HepG2 (cell line): ENCODE measurements at regions of chr3 and their contacts with region 1.

Region 1: DNA sequence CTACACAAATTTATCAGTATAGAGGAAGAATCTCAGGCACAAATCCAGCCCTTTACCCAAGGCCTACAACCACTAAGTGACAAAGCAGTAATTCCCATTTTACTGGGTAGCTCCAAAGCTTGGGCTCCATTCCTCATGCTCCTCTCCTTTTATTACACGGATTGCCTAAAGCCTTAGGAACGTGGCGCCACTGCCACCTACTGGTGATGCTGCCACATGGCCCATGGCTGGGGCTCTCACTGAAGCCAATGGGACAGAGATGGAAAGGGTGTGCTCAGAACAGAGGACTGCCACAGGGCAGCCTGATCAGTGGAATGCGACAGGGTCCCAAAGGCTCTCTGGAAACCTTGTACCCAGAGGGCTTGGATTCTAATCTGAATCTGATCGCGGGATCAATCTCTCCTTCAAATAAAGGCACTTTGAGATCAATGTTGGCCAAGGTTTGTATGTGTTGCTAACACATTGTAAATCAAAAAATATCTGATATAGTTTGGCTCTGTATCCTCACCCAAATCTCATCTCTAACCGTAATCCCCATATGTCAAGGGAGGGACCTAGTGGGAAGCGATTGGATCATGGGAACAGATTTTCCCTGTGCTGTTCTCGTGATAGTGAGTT is 33.5 kb upstream of the LYZL4 start:
- DNase-seq: peak; percentile 70
- ATAC-seq: peak; percentile 99
- H3K4me3 ChIP-seq: no peak overlapping the region
- H3K27ac ChIP-seq: no peak overlapping the region
- H3K4me1 ChIP-seq: no peaks in the 10 kb centered on the region
- H3K27me3 ChIP-seq: no peaks in the 10 kb centered on the region
- CTCF ChIP-seq: peak; percentile 98
- EP300 ChIP-seq: no peak
- POLR2A ChIP-seq: no peak
- RAD21 ChIP-seq: peak; percentile 97

Region 2: DNA sequence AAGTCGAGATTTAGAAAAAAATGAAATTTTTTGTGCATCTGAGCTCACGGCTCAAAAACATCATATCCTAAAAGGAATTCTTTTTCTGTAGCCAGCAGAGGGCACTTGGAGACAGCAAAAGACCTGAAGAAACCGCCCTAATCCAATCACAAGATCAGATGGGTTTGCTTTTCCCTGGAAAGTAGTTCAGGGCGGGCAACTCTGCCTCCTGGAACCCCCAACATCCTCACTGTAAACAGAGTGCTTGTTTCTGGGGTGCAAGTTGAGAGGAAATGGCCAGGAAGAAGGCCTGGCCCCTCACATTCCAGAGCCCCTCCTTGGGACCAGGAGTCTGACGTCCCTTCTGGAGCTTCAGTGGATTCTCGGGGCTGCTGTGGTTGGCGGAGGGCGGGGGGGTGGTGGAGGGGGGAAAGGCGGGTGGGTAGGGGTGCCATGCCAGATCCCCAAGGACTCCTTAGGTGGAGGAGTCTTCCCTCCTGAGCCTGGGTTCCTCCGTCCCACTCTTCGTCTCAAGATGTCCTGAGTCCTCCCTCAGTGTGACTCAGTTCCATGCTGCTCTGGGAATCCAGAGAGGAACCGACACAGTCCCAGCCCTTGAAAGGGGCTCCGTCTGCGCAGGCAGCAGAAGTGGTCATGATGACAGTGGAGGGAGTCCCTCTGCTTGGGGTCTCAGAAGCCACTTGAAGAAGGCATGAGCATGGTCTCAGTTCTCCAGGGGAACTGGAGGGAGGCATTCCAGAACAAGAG is 213.8 kb before region 1 on chr3:
- CTCF ChIA-PET with region 1: interaction called, 25 read pairs
- POLR2A ChIA-PET with region 1: no interaction called
- in situ Hi-C with region 1: no loop called
- intact Hi-C with region 1: loop called (anchors 1 kb)
- DNase-seq: peak; percentile 50
- ATAC-seq: peak; percentile 51
- H3K4me3 ChIP-seq: no peak overlapping the region
- H3K27ac ChIP-seq: no peak overlapping the region
- H3K4me1 ChIP-seq: peaks cover 12% of the 10 kb centered on the region
- H3K27me3 ChIP-seq: peaks cover 0 to 12% of the 10 kb centered on the region in 2 experiments; a peak in 1 of 5 replicates
- CTCF ChIP-seq: peak; percentile 69
- EP300 ChIP-seq: no peak
- POLR2A ChIP-seq: no peak
- RAD21 ChIP-seq: peak; percentile 74

Region 3: DNA sequence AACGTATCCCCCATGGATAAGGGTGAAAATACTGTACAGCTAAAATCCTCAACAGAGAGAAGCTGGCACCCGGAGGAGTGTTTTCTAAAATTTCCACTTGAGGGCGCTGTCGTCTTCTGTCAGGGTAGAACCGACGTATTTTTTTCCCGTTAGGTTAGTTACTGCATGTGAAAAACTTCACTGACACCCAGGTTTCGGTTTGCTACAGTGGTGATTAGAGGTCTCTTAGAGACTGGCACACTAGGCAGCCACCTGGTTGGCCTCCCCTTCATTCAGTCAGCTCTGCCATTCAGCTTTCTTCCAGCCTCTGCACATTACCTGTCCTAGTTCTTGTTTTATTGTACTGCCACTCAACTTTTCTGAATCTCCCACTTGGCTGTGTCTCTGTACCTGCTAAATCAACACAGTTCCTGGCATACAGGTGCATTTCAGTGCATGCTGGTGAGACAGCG is 196.3 kb before region 1 on chr3:
- CTCF ChIA-PET with region 1: interaction called, 65 read pairs
- POLR2A ChIA-PET with region 1: no interaction called
- in situ Hi-C with region 1: loop called (anchors 5 kb)
- intact Hi-C with region 1: loop called (anchors 1 kb)
- DNase-seq: peak; percentile 59
- ATAC-seq: peak; percentile 85
- H3K4me3 ChIP-seq: 0 out of 6 replicates have a peak overlapping the region, but pooled peaks of 1 of the 3 experiments have one; percentile 12
- H3K27ac ChIP-seq: no peak overlapping the region
- H3K4me1 ChIP-seq: no peaks in the 10 kb centered on the region
- H3K27me3 ChIP-seq: peaks cover 0 to 22% of the 10 kb centered on the region in 2 experiments; a peak in 3 of 5 replicates
- CTCF ChIP-seq: peak; percentile 82
- EP300 ChIP-seq: no peak
- POLR2A ChIP-seq: no peak
- RAD21 ChIP-seq: peak; percentile 81

Region 4: DNA sequence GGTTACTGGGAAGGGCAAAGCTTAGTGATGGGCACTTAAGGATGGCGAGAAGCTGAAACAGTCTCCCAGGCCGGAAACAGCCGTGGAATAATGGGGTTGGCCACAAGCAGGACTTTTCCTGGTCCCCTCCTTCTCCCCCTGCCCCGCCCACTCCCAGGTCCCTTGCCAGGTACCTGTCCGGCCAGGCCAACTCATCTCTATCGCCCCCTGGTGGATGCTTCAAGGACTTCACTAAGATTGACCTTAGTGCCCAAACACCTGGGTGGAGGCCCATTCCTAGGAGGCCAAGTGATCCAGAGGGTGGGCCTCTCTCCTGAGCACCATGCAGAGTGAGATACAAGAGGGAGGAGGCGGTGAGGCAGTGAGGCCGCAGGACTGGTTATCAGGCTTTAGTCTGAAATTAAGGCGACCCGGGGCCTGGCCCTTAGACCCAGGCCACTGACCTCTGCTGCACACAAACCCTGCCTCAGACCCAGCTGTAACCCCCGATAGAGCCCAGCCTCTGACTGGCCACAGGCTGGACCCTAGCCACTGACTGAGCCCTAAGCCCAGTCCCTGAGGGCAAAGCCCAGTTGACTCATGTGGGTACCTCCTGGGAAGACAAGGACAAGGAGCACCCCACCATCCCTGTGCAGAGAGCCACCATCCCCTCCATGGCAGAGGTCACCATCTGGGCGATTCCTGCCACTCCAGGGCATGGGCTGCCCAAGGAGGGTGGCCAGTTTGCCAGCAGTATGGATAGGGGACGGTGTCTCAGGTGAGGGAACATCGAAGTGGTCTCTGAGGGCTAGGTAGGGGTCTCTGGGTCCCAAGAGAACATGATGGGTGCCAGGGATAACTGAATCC is 96.2 kb after region 1 on chr3:
- CTCF ChIA-PET with region 1: no interaction called
- POLR2A ChIA-PET with region 1: no interaction called
- in situ Hi-C with region 1: loop called (anchors 10 kb)
- intact Hi-C with region 1: loop called (anchors 5 kb)
- DNase-seq: peak; percentile 54
- ATAC-seq: peak; percentile 59
- H3K4me3 ChIP-seq: no peak overlapping the region
- H3K27ac ChIP-seq: no peak overlapping the region
- H3K4me1 ChIP-seq: peaks cover 13% of the 10 kb centered on the region
- H3K27me3 ChIP-seq: no peaks in the 10 kb centered on the region
- CTCF ChIP-seq: peak; percentile 79
- EP300 ChIP-seq: no peak
- POLR2A ChIP-seq: no peak
- RAD21 ChIP-seq: 0 out of 2 replicates have a peak, but pooled peaks have one; percentile 24

Region 5: DNA sequence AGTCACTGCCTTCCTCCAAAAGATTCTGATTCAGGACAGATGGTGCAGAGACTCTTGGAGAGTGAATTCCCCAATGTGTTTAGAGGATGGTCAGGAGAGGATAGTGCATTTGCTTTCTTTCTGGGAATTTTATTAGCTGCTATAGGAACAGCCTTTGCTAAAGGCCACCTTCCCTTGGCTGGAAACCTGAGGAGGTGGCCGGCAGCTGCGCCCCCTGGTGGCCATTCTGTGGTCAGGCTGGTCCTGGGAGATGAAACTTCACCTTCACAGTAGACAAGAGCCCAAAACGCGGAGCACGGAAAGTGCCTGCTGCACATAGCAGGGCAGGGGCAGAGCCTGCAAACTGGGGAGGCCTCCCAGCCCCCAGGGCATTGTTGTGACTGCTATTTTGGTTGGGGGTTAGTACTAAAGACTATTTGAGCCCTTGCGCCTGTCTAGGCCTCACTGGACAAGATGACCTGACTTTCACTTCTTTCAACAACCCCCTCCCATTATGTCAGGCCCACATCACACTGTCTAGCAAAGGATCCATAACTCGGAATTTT is 103.5 kb after region 1 on chr3:
- CTCF ChIA-PET with region 1: no interaction called
- POLR2A ChIA-PET with region 1: no interaction called
- in situ Hi-C with region 1: loop called (anchors 10 kb)
- intact Hi-C with region 1: no loop called
- DNase-seq: peak; percentile 23
- ATAC-seq: peak; percentile 67
- H3K4me3 ChIP-seq: no peak overlapping the region
- H3K27ac ChIP-seq: no peak overlapping the region
- H3K4me1 ChIP-seq: peaks cover 22% of the 10 kb centered on the region
- H3K27me3 ChIP-seq: no peaks in the 10 kb centered on the region
- CTCF ChIP-seq: peak; percentile 90
- EP300 ChIP-seq: no peak
- POLR2A ChIP-seq: no peak
- RAD21 ChIP-seq: peak; percentile 62

Region 6: DNA sequence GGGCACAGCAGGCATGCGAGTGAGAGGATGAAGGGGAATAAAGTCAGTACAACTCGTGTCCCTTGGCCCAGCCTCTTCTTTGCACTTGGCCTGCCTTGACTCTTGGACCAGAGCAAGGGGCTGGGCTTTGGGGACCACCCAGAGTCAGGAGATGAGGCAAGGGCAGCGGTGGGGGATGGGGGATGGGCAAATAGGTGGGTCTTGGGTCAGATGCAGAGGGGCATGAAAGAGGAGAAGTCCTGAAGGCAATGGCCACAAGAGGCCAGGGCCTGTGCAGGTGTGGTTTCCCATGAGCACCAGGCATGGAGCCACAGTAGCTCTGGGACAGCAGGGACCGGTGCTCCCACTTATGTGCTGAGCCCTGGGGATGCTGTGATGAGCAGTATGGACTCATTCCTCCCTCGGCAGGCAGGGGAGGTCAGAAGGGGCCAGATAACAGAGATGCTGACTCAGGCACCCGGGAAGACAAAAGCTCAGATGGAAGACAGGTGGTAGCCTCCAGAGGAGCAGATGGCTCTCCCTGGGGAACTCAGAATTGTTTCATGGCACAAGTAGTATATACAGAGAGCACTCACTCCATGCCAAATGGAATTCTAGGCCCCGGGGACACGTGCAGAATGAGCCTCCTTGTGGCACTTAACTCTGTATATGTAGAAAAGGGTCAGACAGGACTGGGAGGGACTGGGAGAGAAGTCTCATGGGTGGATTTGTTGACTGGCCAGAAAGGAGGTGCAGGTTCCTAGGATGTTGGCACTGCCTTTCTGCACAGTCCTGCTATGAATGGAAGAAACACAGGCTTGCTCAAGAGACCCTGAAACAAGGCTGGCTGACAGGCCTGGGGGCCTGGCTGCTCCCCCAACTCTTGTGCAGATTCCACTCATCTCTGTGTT is 223.8 kb after region 1 on chr3:
- CTCF ChIA-PET with region 1: no interaction called
- POLR2A ChIA-PET with region 1: no interaction called
- in situ Hi-C with region 1: no loop called
- intact Hi-C with region 1: no loop called
- DNase-seq: no peak
- ATAC-seq: no peak
- H3K4me3 ChIP-seq: no peak overlapping the region
- H3K27ac ChIP-seq: no peak overlapping the region
- H3K4me1 ChIP-seq: peaks cover 12% of the 10 kb centered on the region
- H3K27me3 ChIP-seq: no peaks in the 10 kb centered on the region
- CTCF ChIP-seq: no peak
- EP300 ChIP-seq: no peak
- POLR2A ChIP-seq: no peak
- RAD21 ChIP-seq: no peak

Region 7: GRCh38 chr3:42685891-42686820 is 242.2 kb after region 1 on chr3:
- CTCF ChIA-PET with region 1: no interaction called
- POLR2A ChIA-PET with region 1: no interaction called
- in situ Hi-C with region 1: no loop called
- intact Hi-C with region 1: no loop called
- DNase-seq: no peak
- ATAC-seq: no peak
- H3K4me3 ChIP-seq: no peak overlapping the region
- H3K27ac ChIP-seq: no peak overlapping the region
- H3K4me1 ChIP-seq: peaks cover 5% of the 10 kb centered on the region; the same call in 1 of the 2 replicates
- H3K27me3 ChIP-seq: peaks cover 3 to 46% of the 10 kb centered on the region in 2 experiments; a peak in 3 of 5 replicates
- CTCF ChIP-seq: no peak
- EP300 ChIP-seq: no peak
- POLR2A ChIP-seq: no peak
- RAD21 ChIP-seq: no peak